Psoas muscle (tissue), 8 donors: ENCODE measurements at regions of chr15 and their contacts with region 1.

Region 1: GRCh38 chr15:42324308-42324707 is 35.0 kb upstream of the CAPN3 start:
- DNase-seq: no peak
- ATAC-seq: peak; percentile 78 to 93 (median 86)
- H3K4me3 ChIP-seq: no peak overlapping the region
- H3K27ac ChIP-seq: peak overlapping the region; percentile 77
- H3K4me1 ChIP-seq: peaks cover 14% of the 10 kb centered on the region
- H3K27me3 ChIP-seq: no peaks in the 10 kb centered on the region
- CTCF ChIP-seq: no peak

Region 2: GRCh38 chr15:42282344-42282743 is 42.0 kb before region 1 on chr15:
- intact Hi-C with region 1: loop called in 1 of 2 experiments (anchors 5 kb)
- DNase-seq: no peak
- ATAC-seq: peak; percentile 37 to 80 (median 64)
- H3K4me3 ChIP-seq: no peak overlapping the region
- H3K27ac ChIP-seq: peak overlapping the region; percentile 47
- H3K4me1 ChIP-seq: peaks cover 14% of the 10 kb centered on the region
- H3K27me3 ChIP-seq: no peaks in the 10 kb centered on the region
- CTCF ChIP-seq: no peak

Region 3: DNA sequence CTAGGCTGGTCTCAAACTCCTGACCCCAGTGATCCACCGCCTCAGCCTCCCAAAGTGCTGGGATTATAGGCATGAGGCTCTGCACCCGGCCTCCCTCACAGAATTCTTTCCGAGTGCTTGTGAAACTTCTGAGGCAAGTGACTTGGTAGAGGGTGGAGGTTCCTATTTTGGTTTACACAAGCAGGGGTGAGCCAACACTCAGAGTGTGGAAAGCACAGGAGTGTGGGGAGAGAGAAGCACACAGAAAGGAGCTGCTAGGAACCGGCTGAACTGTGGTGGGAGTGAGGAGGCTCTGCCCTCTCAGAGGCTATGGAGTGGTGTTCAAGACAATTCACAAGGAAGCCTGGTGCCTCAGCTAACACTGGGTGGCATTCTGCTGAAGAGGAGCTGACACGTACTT is 42.7 kb after region 1 on chr15:
- intact Hi-C with region 1: loop called in 1 of 2 experiments (anchors 5 kb)
- DNase-seq: no peak
- ATAC-seq: peak; percentile 76 to 92 (median 88)
- H3K4me3 ChIP-seq: peak overlapping the region; percentile 9
- H3K27ac ChIP-seq: peak overlapping the region; percentile 97
- H3K4me1 ChIP-seq: peaks cover 69% of the 10 kb centered on the region
- H3K27me3 ChIP-seq: no peaks in the 10 kb centered on the region
- CTCF ChIP-seq: no peak

Region 4: DNA sequence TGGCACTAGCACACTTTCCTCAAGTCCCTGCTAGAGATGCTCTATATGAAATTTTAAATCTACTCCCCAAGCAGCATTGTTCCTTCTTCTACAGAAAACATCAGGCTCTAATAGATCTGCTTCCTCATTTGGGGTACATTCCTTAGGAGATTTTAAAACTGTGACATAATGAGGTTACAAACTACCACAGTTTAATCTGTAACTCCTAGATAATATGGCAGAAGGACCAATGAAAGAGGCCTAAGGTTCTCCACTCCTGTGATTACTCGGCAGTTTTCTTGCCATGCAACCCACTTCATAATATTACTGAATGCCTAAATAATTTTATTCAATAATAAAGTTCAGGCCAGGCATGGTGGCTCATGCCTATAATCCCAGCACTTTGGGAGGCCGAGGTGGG is 150.5 kb after region 1 on chr15:
- intact Hi-C with region 1: no loop called
- DNase-seq: no peak
- ATAC-seq: no peak
- H3K4me3 ChIP-seq: no peak overlapping the region
- H3K27ac ChIP-seq: peak overlapping the region; percentile 32
- H3K4me1 ChIP-seq: peaks cover 26% of the 10 kb centered on the region
- H3K27me3 ChIP-seq: no peaks in the 10 kb centered on the region
- CTCF ChIP-seq: no peak